ENCODE measurements at regions of chr7 and their contacts with region 1.

Region 1: GRCh38 chr7:51141451-51142003 is 175.1 kb downstream of the COBL start:
- DNase-seq: peak; percentile 56
- H3K4me3 Mint-ChIP-seq: no peak overlapping the region
- H3K27ac Mint-ChIP-seq: peak overlapping the region; percentile 70
- H3K4me1 Mint-ChIP-seq: peaks cover 53% of the 10 kb centered on the region
- H3K27me3 Mint-ChIP-seq: no peaks in the 10 kb centered on the region
- CTCF ChIP-seq: peak; percentile 72

Region 2: GRCh38 chr7:50092579-50093491 is 1048.7 kb before region 1 on chr7 and contains the start of gene ZPBP:
- CTCF ChIA-PET with region 1: no interaction called
- intact Hi-C with region 1: loop called (anchors 1 kb)
- DNase-seq: peak; percentile 38
- H3K4me3 Mint-ChIP-seq: no peak within 1 kb of the TSS
- H3K27ac Mint-ChIP-seq: no peak within 1 kb of the TSS
- H3K4me1 Mint-ChIP-seq: no peaks in the 10 kb centered on the region
- H3K27me3 Mint-ChIP-seq: peaks cover 44% of the 10 kb centered on the region
- CTCF ChIP-seq: peak; percentile 87
- total RNA-seq, gene ZPBP: not detected in 2 replicates

Region 3: GRCh38 chr7:50614721-50615518 is 526.6 kb before region 1 on chr7:
- CTCF ChIA-PET with region 1: interaction called, 8 read pairs
- intact Hi-C with region 1: loop called (anchors 2 kb)
- DNase-seq: no peak
- H3K4me3 Mint-ChIP-seq: peak overlapping the region; percentile 20
- H3K27ac Mint-ChIP-seq: no peak overlapping the region
- H3K4me1 Mint-ChIP-seq: peaks cover 34% of the 10 kb centered on the region
- H3K27me3 Mint-ChIP-seq: no peaks in the 10 kb centered on the region
- CTCF ChIP-seq: peak; percentile 40

Region 4: DNA sequence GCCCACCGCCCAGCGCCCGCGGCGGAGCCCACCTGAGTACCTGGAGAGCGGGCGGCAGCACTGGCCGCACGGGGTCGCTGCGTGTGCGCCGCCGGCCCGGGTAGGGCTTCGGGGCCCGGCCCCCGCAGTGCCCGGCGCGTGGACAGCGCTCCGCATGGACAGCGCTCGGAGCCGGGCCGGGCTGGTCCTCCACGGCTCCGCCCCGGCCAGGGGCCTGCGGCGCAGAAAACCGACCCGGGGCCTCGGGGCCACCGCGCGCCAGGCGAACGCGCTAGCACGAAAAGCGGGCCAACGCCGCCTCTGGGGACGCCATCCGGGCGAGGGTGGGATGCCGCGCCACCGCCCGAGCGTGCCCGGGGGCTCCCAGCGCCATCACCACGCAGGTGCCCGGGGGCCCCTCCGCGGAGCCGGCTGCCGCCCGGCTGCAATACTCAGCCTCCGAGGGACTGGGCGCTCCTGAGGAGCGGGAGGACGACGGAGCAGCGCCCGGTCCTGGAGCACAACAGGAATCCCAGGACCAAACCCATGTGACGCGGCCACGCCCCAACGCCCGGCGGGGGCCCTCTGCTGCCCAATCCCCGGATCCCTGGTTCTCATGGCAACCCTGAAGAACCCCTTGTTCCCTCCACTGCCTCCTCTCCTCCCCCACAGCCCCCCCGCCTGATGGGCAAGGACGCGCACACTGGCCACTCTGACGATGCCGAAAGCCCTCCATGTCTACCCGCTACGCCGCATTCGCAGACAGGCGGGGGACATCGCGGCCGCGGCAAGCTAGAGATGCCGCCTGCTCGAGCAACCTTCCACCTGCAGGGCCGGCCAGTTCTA is 358.9 kb before region 1 on chr7 and contains the start of gene GRB10:
- CTCF ChIA-PET with region 1: interaction called, 4 read pairs
- intact Hi-C with region 1: loop called (anchors 2 kb)
- DNase-seq: peak; percentile 70
- H3K4me3 Mint-ChIP-seq: peak within 1 kb of the TSS; percentile 72
- H3K27ac Mint-ChIP-seq: no peak within 1 kb of the TSS
- H3K4me1 Mint-ChIP-seq: peaks cover 81% of the 10 kb centered on the region
- H3K27me3 Mint-ChIP-seq: no peaks in the 10 kb centered on the region
- CTCF ChIP-seq: peak; percentile 50
- total RNA-seq, gene GRB10: 86.2 and 90.6 TPM in 2 replicates

Region 5: GRCh38 chr7:50982626-50983025 is 158.9 kb before region 1 on chr7:
- CTCF ChIA-PET with region 1: interaction called, 3 read pairs
- intact Hi-C with region 1: loop called (anchors 5 kb)
- DNase-seq: peak; percentile 54
- H3K4me3 Mint-ChIP-seq: no peak overlapping the region
- H3K27ac Mint-ChIP-seq: no peak overlapping the region
- H3K4me1 Mint-ChIP-seq: peaks cover 6% of the 10 kb centered on the region
- H3K27me3 Mint-ChIP-seq: no peaks in the 10 kb centered on the region
- CTCF ChIP-seq: no peak

Region 6: GRCh38 chr7:51162724-51163329 is 21.3 kb after region 1 on chr7:
- CTCF ChIA-PET with region 1: interaction called, 17 read pairs
- intact Hi-C with region 1: no loop called
- DNase-seq: peak; percentile 94
- H3K4me3 Mint-ChIP-seq: no peak overlapping the region
- H3K27ac Mint-ChIP-seq: no peak overlapping the region
- H3K4me1 Mint-ChIP-seq: no peaks in the 10 kb centered on the region
- H3K27me3 Mint-ChIP-seq: no peaks in the 10 kb centered on the region
- CTCF ChIP-seq: peak; percentile 94

Region 7: DNA sequence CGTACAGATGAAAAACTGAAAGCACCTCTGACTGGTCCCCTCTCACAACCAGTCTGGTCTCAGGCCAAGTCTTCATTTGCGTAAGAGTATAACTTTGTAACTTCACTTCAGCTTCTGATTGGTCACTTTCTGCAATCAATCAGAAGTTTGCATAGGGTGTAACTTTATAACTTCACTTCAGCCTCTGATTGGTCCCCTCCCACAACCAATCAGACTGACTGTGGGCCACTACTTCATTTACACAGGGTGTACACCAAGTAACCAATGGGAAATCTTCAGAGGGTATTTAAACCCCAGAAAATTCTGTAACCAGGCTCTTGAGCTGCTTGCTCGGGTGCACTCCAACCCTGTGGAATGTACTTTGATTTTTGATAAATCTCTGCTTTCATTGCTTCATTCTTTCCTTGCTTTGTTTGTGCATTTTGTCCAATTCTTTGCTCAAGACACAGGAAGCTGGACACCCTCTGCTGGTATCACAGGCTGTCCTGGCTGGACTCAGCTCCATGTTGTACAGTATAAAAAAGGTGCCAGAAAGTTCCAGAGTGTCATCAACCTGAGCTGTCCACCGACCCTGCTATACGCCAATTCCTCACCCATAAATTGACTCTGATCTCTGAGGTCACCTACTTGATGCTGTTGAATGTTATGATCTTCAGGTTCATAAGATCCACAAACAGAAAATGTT is 100.6 kb after region 1 on chr7:
- CTCF ChIA-PET with region 1: no interaction called
- intact Hi-C with region 1: no loop called
- DNase-seq: no peak
- H3K4me3 Mint-ChIP-seq: no peak overlapping the region
- H3K27ac Mint-ChIP-seq: no peak overlapping the region
- H3K4me1 Mint-ChIP-seq: no peaks in the 10 kb centered on the region
- H3K27me3 Mint-ChIP-seq: no peaks in the 10 kb centered on the region
- CTCF ChIP-seq: no peak

Measured in Calu3 (cell line).